HepG2 (cell line): ENCODE measurements at regions of chr12 and their contacts with region 1.

Region 1: GRCh38 chr12:121005346-121005815 is 10.9 kb downstream of the C12orf43 start:
- DNase-seq: peak; percentile 59
- ATAC-seq: peak; percentile 44
- H3K4me3 ChIP-seq: no peak overlapping the region
- H3K27ac ChIP-seq: no peak overlapping the region
- H3K4me1 ChIP-seq: peaks cover 16% of the 10 kb centered on the region; the same call in 1 of the 2 replicates
- H3K27me3 ChIP-seq: no peaks in the 10 kb centered on the region
- CTCF ChIP-seq: peak; percentile 88
- EP300 ChIP-seq: no peak
- POLR2A ChIP-seq: peak in 1 of 2 experiments; percentile 32; a peak in 1 of 4 replicates
- RAD21 ChIP-seq: peak; percentile 80

Region 2: GRCh38 chr12:120914794-120915193 is 90.6 kb before region 1 on chr12:
- CTCF ChIA-PET with region 1: no interaction called
- POLR2A ChIA-PET with region 1: no interaction called
- in situ Hi-C with region 1: no loop called
- intact Hi-C with region 1: no loop called
- DNase-seq: no peak
- ATAC-seq: no peak
- H3K4me3 ChIP-seq: no peak overlapping the region
- H3K27ac ChIP-seq: no peak overlapping the region
- H3K4me1 ChIP-seq: no peaks in the 10 kb centered on the region
- H3K27me3 ChIP-seq: no peaks in the 10 kb centered on the region; a peak in 1 of 5 replicates
- CTCF ChIP-seq: no peak
- EP300 ChIP-seq: no peak
- POLR2A ChIP-seq: no peak
- RAD21 ChIP-seq: no peak

Region 3: GRCh38 chr12:120944645-120945231 is 60.6 kb before region 1 on chr12:
- CTCF ChIA-PET with region 1: interaction called, 12 read pairs
- POLR2A ChIA-PET with region 1: interaction called, 4 read pairs
- in situ Hi-C with region 1: no loop called
- intact Hi-C with region 1: no loop called
- DNase-seq: no peak
- ATAC-seq: peak; percentile 70
- H3K4me3 ChIP-seq: peak overlapping the region in 2 of 3 experiments; percentile 13 to 33; a peak in 2 of 6 replicates
- H3K27ac ChIP-seq: no peak overlapping the region
- H3K4me1 ChIP-seq: peaks cover 51% of the 10 kb centered on the region
- H3K27me3 ChIP-seq: no peaks in the 10 kb centered on the region
- CTCF ChIP-seq: peak; percentile 68
- EP300 ChIP-seq: no peak
- POLR2A ChIP-seq: no peak
- RAD21 ChIP-seq: peak; percentile 46; the same call in 1 of the 2 replicates

Region 4: DNA sequence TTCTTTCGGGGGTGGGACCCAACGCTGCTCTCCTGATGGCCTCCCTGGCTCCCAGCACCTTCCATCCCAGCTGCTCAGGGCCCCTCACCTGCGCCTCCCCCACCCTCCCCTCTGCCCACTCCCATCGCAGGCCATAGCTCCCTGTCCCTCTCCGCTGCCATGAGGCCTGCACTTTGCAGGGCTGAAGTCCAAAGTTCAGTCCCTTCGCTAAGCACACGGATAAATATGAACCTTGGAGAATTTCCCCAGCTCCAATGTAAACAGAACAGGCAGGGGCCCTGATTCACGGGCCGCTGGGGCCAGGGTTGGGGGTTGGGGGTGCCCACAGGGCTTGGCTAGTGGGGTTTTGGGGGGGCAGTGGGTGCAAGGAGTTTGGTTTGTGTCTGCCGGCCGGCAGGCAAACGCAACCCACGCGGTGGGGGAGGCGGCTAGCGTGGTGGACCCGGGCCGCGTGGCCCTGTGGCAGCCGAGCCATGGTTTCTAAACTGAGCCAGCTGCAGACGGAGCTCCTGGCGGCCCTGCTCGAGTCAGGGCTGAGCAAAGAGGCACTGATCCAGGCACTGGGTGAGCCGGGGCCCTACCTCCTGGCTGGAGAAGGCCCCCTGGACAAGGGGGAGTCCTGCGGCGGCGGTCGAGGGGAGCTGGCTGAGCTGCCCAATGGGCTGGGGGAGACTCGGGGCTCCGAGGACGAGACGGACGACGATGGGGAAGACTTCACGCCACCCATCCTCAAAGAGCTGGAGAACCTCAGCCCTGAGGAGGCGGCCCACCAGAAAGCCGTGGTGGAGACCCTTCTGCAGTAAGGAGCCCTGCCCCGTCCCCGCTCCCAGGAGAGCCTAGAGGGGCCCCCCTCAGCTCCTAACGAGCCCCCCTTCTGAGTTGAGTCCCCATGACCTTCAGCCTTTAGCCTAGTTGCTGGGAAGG is 26.8 kb before region 1 on chr12 and contains the start of gene HNF1A:
- CTCF ChIA-PET with region 1: no interaction called
- POLR2A ChIA-PET with region 1: interaction called, 114 read pairs
- in situ Hi-C with region 1: no loop called
- intact Hi-C with region 1: no loop called
- DNase-seq: peak; percentile 95
- ATAC-seq: peak; percentile 70
- H3K4me3 ChIP-seq: peak within 1 kb of the TSS; percentile 90 to 98 (median 98)
- H3K27ac ChIP-seq: peak within 1 kb of the TSS; percentile 100
- H3K4me1 ChIP-seq: peaks cover 60% of the 10 kb centered on the region
- H3K27me3 ChIP-seq: no peaks in the 10 kb centered on the region; a peak in 1 of 5 replicates
- CTCF ChIP-seq: no peak
- EP300 ChIP-seq: peak; percentile 75 to 94; a peak in 3 of 4 replicates
- POLR2A ChIP-seq: peak; percentile 37 to 41; a peak in 2 of 4 replicates
- RAD21 ChIP-seq: peak; percentile 28; the same call in 1 of the 2 replicates
- total RNA-seq, gene HNF1A: 27.0 and 34.7 TPM in 2 replicates

Region 5: DNA sequence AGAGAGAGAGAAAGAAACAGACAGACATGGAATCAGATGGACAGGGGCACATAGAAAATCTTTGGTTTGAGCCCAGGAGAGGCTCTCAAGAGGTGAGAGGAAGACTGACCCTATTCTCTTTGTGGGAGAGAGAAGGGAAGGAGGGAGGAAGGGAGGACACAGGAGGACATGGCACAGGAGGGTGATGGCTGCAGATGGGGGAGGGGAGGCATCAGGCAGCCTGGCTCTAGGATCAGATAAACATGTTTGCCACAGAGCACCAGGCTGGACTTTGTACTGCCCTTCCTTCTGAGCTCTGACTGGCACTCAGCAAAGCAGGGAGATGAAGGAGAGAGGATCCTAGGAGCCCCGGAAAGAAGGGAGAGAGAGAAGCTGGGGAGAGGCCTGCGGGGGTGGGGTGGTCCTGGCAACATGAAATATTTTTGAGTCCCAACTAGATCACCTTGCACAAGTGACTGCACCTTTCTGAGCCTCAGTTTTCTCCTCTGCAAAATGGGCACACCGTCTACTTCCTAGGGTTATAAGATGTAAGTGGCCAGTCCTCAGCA is 21.0 kb before region 1 on chr12:
- CTCF ChIA-PET with region 1: no interaction called
- POLR2A ChIA-PET with region 1: interaction called, 114 read pairs
- in situ Hi-C with region 1: no loop called
- intact Hi-C with region 1: no loop called
- DNase-seq: peak; percentile 87
- ATAC-seq: peak; percentile 9
- H3K4me3 ChIP-seq: peak overlapping the region in 1 of 3 experiments; percentile 35; a peak in 1 of 6 replicates
- H3K27ac ChIP-seq: peak overlapping the region; percentile 75
- H3K4me1 ChIP-seq: peaks cover 50% of the 10 kb centered on the region
- H3K27me3 ChIP-seq: no peaks in the 10 kb centered on the region; a peak in 1 of 5 replicates
- CTCF ChIP-seq: no peak
- EP300 ChIP-seq: peak in 1 of 2 experiments; percentile 67; a peak in 2 of 4 replicates
- POLR2A ChIP-seq: peak in 1 of 2 experiments; percentile 47; a peak in 1 of 4 replicates
- RAD21 ChIP-seq: no peak

Region 6: DNA sequence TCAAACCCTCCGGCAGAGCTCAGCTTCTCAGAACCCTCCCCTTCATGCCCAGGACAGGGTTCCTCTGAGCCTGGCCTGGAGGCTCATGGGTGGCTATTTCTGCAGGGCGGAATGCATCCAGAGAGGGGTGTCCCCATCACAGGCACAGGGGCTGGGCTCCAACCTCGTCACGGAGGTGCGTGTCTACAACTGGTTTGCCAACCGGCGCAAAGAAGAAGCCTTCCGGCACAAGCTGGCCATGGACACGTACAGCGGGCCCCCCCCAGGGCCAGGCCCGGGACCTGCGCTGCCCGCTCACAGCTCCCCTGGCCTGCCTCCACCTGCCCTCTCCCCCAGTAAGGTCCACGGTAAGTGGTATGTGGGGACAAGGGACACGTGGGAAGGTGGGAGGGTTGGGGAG is 11.3 kb before region 1 on chr12:
- CTCF ChIA-PET with region 1: no interaction called
- POLR2A ChIA-PET with region 1: interaction called, 16 read pairs
- in situ Hi-C with region 1: no loop called
- intact Hi-C with region 1: no loop called
- DNase-seq: no peak
- ATAC-seq: no peak; the same call in 2 of the 3 replicates
- H3K4me3 ChIP-seq: no peak overlapping the region
- H3K27ac ChIP-seq: no peak overlapping the region
- H3K4me1 ChIP-seq: 0 out of 2 replicates have a peak, but pooled peaks cover 7% of the 10 kb centered on the region
- H3K27me3 ChIP-seq: no peaks in the 10 kb centered on the region
- CTCF ChIP-seq: no peak
- EP300 ChIP-seq: no peak
- POLR2A ChIP-seq: no peak
- RAD21 ChIP-seq: no peak

Region 7: GRCh38 chr12:121060149-121061001 is 55.0 kb after region 1 on chr12:
- CTCF ChIA-PET with region 1: no interaction called
- POLR2A ChIA-PET with region 1: no interaction called
- in situ Hi-C with region 1: no loop called
- intact Hi-C with region 1: loop called (anchors 2 kb)
- DNase-seq: peak; percentile 63
- ATAC-seq: peak; percentile 91
- H3K4me3 ChIP-seq: peak overlapping the region; percentile 45 to 78 (median 56)
- H3K27ac ChIP-seq: peak overlapping the region; percentile 32
- H3K4me1 ChIP-seq: peaks cover 19% of the 10 kb centered on the region
- H3K27me3 ChIP-seq: 0 out of 5 replicates have a peak, but pooled peaks cover 0 to 2% of the 10 kb centered on the region in 2 experiments
- CTCF ChIP-seq: peak; percentile 70
- EP300 ChIP-seq: no peak
- POLR2A ChIP-seq: no peak
- RAD21 ChIP-seq: peak; percentile 47; the same call in 1 of the 2 replicates

Region 8: DNA sequence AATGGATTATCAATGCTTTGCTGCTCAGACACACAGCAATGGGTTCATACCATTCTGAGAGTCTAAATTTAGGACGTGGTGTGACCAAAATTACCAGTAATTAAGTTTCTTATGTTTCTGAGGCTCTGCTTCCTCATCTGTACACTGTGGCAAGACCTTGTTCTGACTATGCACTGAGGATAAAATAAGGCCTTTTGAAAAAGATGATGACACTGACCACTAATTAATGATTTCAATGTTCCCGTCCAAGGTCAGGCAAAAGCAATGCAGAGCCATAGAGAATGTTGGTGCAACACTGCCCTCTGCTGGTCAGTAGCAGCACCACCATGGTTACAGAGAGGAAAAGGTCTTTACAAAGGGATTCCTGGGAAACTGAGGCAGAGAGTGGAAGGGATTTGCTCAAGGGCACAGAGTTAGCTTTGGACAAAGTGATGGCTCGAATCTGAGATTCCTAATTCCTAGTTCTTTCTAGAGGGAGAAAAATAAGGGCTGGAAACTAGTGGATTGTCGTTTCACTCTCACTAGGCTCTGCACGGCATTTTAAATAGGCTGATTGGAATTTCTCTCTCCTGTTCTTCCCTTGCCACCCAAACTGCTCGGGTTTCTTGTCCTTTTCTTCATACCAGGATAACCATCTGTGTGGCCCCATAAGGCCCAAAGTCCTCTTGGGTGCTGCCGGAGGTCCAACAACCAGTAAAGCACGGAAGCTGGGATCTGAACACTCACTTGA is 105.0 kb after region 1 on chr12:
- CTCF ChIA-PET with region 1: interaction called, 4 read pairs
- POLR2A ChIA-PET with region 1: no interaction called
- in situ Hi-C with region 1: no loop called
- intact Hi-C with region 1: loop called (anchors 1 kb)
- DNase-seq: peak; percentile 60
- ATAC-seq: peak; percentile 69
- H3K4me3 ChIP-seq: no peak overlapping the region
- H3K27ac ChIP-seq: no peak overlapping the region
- H3K4me1 ChIP-seq: peaks cover 20% of the 10 kb centered on the region
- H3K27me3 ChIP-seq: peaks cover 3 to 14% of the 10 kb centered on the region in 2 experiments; a peak in 3 of 5 replicates
- CTCF ChIP-seq: peak; percentile 94
- EP300 ChIP-seq: no peak
- POLR2A ChIP-seq: no peak
- RAD21 ChIP-seq: peak; percentile 72